Thyroid gland (tissue), 4 donors: ENCODE measurements at regions of chr1 and their contacts with region 1.

Region 1: GRCh38 chr1:39538588-39539465 is 37.8 kb downstream of the PABPC4 start:
- DNase-seq: peak; percentile 75 to 79
- H3K4me3 ChIP-seq: no peak overlapping the region
- H3K27ac ChIP-seq: peak overlapping the region in 1 of 3 donors; percentile 54
- H3K4me1 ChIP-seq: peaks cover 0 to 7% of the 10 kb centered on the region in 2 donors
- H3K27me3 ChIP-seq: no peaks in the 10 kb centered on the region
- CTCF ChIP-seq: peak; percentile 77 to 94 (median 89)
- POLR2A ChIP-seq: no peak

Region 2: GRCh38 chr1:39098546-39099250 is 440.1 kb before region 1 on chr1:
- intact Hi-C with region 1: loop called (anchors 5 kb)
- DNase-seq: peak; percentile 59 to 64
- H3K4me3 ChIP-seq: no peak overlapping the region
- H3K27ac ChIP-seq: no peak overlapping the region
- H3K4me1 ChIP-seq: peaks cover 11% of the 10 kb centered on the region in 2 donors
- H3K27me3 ChIP-seq: no peaks in the 10 kb centered on the region
- CTCF ChIP-seq: peak; percentile 36 to 77 (median 75)
- POLR2A ChIP-seq: no peak

Region 3: DNA sequence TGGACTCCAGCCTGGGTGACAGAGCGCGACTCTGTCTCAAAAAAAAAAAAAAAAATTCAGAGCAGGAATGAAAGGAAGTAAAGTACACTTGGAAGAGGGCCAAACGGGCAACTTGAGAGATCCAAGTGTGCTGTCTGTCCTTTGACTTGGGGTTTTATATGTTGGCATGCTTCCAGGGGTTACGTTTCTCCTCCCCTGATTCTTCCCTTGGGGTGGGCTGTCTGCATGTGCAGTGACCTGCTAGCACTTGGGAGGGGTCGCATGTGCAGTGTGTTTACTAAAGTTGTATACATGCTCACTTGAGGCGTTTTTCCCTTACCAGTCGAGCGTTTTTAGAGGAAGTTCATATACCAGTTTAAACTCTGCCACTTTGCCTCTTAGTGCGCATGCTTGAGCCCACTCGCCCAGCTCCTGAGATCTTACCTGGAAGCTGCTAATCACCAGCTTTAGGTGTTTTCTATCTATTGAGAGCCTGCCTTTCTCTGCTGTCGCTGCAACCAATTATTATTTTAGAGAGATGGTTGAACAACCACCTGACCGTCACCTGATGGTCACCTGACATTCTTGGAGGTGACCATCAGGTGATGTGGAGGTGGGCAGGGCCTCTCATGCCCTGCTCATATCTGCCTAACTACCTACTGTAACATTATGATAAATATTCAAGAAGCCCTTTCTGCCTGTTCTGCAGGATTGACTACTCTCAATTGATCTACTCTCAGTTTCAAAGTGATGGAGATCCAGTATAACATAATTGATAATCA is 194.3 kb before region 1 on chr1:
- intact Hi-C with region 1: loop called (anchors 5 kb)
- DNase-seq: peak; percentile 58 to 65
- H3K4me3 ChIP-seq: no peak overlapping the region
- H3K27ac ChIP-seq: peak overlapping the region; percentile 1 to 39 (median 32)
- H3K4me1 ChIP-seq: peaks cover 14 to 21% of the 10 kb centered on the region in 2 donors
- H3K27me3 ChIP-seq: no peaks in the 10 kb centered on the region
- CTCF ChIP-seq: no peak
- POLR2A ChIP-seq: no peak

Region 4: GRCh38 chr1:39360731-39361130 is 178.1 kb before region 1 on chr1:
- intact Hi-C with region 1: loop called (anchors 10 kb)
- DNase-seq: no peak
- H3K4me3 ChIP-seq: no peak overlapping the region
- H3K27ac ChIP-seq: no peak overlapping the region
- H3K4me1 ChIP-seq: peaks cover 9 to 10% of the 10 kb centered on the region in 2 donors
- H3K27me3 ChIP-seq: no peaks in the 10 kb centered on the region
- CTCF ChIP-seq: no peak
- POLR2A ChIP-seq: no peak

Region 5: DNA sequence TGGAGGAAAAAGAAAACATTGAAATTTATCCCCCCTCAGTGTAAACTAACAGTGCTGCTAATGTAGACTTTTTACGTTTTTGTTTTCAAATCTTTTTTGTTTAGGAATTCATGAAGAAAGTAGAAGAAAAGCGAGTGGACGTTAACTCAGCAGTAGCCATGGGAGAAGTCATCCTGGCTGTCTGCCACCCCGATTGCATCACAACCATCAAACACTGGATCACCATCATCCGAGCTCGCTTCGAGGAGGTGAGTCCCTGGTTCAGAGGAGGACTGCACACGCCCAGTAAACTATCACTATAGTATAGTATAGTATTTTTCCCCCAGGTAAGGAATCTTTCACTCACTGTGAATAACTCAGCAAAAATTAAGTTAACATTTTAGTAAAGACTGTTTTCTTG is 85.2 kb before region 1 on chr1:
- intact Hi-C with region 1: loop called (anchors 10 kb)
- DNase-seq: no peak
- H3K4me3 ChIP-seq: no peak overlapping the region
- H3K27ac ChIP-seq: no peak overlapping the region
- H3K4me1 ChIP-seq: no peaks in the 10 kb centered on the region
- H3K27me3 ChIP-seq: no peaks in the 10 kb centered on the region
- CTCF ChIP-seq: no peak
- POLR2A ChIP-seq: no peak

Region 6: GRCh38 chr1:39590551-39590950 is 51.7 kb after region 1 on chr1:
- intact Hi-C with region 1: no loop called
- DNase-seq: no peak
- H3K4me3 ChIP-seq: no peak overlapping the region
- H3K27ac ChIP-seq: no peak overlapping the region
- H3K4me1 ChIP-seq: no peaks in the 10 kb centered on the region
- H3K27me3 ChIP-seq: no peaks in the 10 kb centered on the region
- CTCF ChIP-seq: no peak
- POLR2A ChIP-seq: no peak